ENCODE measurements at regions of chr2 and their contacts with region 1.

Region 1: GRCh38 chr2:188291617-188292347 is at the start of gene GULP1:
- DNase-seq: peak; percentile 53 to 59
- H3K4me3 ChIP-seq: peak within 1 kb of the TSS; percentile 83
- H3K27ac ChIP-seq: peak within 1 kb of the TSS; percentile 80
- H3K4me1 ChIP-seq: peaks cover 22% of the 10 kb centered on the region
- H3K27me3 ChIP-seq: no peaks in the 10 kb centered on the region
- CTCF ChIP-seq: peak; percentile 57; the same call in 1 of the 2 replicates
- total RNA-seq, gene GULP1: 31.5 and 38.0 TPM in 2 replicates

Region 2: DNA sequence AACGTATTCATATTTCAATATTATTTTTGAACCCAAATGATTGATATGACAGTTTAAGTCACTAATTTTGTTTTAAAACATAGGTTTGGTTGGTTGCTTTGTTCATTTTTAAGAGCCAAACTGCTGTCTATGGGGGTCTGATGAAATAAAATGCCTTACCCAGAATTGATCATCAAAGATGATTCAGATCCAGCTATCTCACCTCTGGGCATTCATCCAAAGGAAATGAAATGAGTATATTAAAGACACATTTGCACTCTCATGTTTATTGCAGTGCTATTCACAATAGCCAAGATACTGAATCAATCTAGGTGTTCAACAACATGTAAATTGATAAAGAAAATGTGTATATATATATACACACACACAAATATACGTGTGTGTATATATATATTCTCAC is 327.0 kb before region 1 on chr2:
- CTCF ChIA-PET with region 1: no interaction called
- POLR2A ChIA-PET with region 1: no interaction called
- intact Hi-C with region 1: no loop called
- DNase-seq: no peak
- H3K4me3 ChIP-seq: no peak overlapping the region
- H3K27ac ChIP-seq: no peak overlapping the region
- H3K4me1 ChIP-seq: no peaks in the 10 kb centered on the region
- H3K27me3 ChIP-seq: no peaks in the 10 kb centered on the region
- CTCF ChIP-seq: no peak

Region 3: DNA sequence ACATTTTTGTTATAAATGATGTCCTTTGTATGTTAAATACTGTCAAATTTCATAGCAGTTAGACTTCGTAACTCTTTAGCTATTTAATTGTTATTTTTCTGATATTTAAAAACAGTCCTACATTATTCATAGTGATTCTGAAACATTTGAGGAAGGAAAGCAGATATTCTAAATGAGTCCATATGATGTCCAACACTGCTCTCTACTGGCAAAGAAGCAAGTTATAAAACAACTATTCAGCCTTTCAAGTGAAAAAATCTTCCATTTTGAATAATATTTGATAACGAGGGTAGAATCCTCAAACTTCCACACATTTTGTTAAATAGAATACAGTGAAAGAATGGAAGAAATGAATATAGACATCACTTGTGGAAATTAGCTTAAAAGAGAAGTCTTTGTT is 220.7 kb after region 1 on chr2:
- CTCF ChIA-PET with region 1: interaction called, 3 read pairs
- POLR2A ChIA-PET with region 1: no interaction called
- intact Hi-C with region 1: loop called (anchors 5 kb)
- DNase-seq: no peak
- H3K4me3 ChIP-seq: no peak overlapping the region
- H3K27ac ChIP-seq: no peak overlapping the region
- H3K4me1 ChIP-seq: no peaks in the 10 kb centered on the region
- H3K27me3 ChIP-seq: no peaks in the 10 kb centered on the region
- CTCF ChIP-seq: peak; percentile 74

Measured in PC-9 (cell line).